RWPE1 (cell line): ENCODE measurements at regions of chr2 and their contacts with region 1.

Region 1: GRCh38 chr2:161592713-161593112 is 31.5 kb upstream of the SLC4A10 start:
- DNase-seq: no peak
- H3K27ac ChIP-seq: no peak overlapping the region
- CTCF ChIP-seq: no peak

Region 2: GRCh38 chr2:160747491-160748169 is 845.1 kb before region 1 on chr2:
- CTCF ChIA-PET with region 1: no interaction called
- POLR2A ChIA-PET with region 1: no interaction called
- DNase-seq: peak; percentile 70
- H3K27ac ChIP-seq: no peak overlapping the region
- CTCF ChIP-seq: no peak

Region 3: GRCh38 chr2:161576421-161576820 is 16.3 kb before region 1 on chr2:
- CTCF ChIA-PET with region 1: no interaction called
- POLR2A ChIA-PET with region 1: no interaction called
- DNase-seq: peak; percentile 5
- H3K27ac ChIP-seq: no peak overlapping the region
- CTCF ChIP-seq: 0 out of 2 replicates have a peak, but pooled peaks have one; percentile 11

Region 4: GRCh38 chr2:161946489-161947107 is 353.9 kb after region 1 on chr2:
- CTCF ChIA-PET with region 1: interaction called, 10 read pairs
- POLR2A ChIA-PET with region 1: no interaction called
- DNase-seq: peak; percentile 22
- H3K27ac ChIP-seq: no peak overlapping the region
- CTCF ChIP-seq: peak; percentile 57